ENCODE measurements at regions of chr6 and their contacts with region 1.

Region 1: DNA sequence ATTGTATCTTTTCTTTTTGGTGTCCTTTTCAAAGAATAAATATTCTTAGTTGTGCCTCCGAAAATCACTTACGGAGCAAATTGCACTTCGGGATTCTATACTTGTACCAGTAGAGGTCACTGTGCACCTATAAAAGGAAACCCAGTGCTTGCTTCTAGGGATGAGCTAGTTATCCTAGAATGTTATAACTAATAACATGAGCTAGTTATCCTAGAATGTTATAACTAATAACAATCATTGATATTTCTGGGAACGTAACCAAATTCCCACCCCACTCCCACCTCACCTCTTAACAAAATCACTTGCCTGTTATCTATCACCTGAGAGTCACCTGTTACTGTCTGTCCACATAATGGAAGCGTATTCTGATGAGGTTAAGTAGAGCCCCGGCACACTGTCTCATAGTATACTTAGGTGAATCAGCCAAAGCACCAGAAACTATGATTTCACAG is 126.9 kb upstream of the TIAM2 start:
- DNase-seq: no peak
- H3K4me3 ChIP-seq: no peak overlapping the region
- H3K27ac ChIP-seq: no peak overlapping the region
- H3K27me3 ChIP-seq: no peaks in the 10 kb centered on the region
- CTCF ChIP-seq: peak; percentile 59 to 88 (median 76)

Region 2: GRCh38 chr6:154689493-154690255 is 178.5 kb before region 1 on chr6:
- intact Hi-C with region 1: no loop called
- DNase-seq: no peak
- H3K4me3 ChIP-seq: no peak overlapping the region
- H3K27ac ChIP-seq: no peak overlapping the region
- H3K27me3 ChIP-seq: no peaks in the 10 kb centered on the region
- CTCF ChIP-seq: no peak

Region 3: DNA sequence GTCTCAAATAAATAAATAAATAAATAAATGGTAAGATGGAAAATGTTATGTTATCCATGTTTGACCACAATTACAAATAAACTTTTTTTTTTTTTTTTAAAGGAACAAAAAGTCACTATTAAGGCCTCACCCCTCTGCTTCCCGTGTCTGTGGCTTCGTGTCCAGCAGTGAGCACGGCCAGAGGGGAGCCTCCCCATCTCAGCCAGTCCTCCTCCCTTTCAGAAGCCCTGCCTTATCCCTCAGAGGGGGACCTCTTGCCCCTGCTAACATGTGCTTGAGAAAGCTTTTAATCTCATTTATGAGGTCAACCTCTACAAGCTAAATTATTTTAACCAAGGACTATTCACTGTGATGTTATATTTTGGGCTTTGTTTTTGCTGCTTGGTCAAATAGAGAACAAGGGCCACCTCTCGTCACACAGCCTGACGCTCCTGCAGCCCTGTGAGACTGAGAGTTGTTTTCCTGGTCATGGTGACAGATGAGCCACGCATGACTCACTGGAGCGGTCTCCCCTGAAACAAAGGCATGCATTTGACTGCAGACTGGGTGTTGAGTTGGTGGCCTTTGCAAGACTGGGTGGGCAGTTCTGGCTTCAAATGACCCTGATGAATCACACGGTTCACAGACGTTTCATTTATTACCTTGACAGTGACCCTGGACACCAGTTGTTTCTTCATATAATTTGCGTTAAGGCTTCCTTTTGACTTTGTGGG is 258.7 kb after region 1 on chr6:
- intact Hi-C with region 1: no loop called
- DNase-seq: peak in 1 of 10 donors; percentile 51
- H3K4me3 ChIP-seq: no peak overlapping the region
- H3K27ac ChIP-seq: no peak overlapping the region
- H3K27me3 ChIP-seq: no peaks in the 10 kb centered on the region
- CTCF ChIP-seq: no peak

Region 4: GRCh38 chr6:155235087-155235486 is 366.9 kb after region 1 on chr6:
- intact Hi-C with region 1: loop called (anchors 10 kb)
- DNase-seq: no peak
- H3K4me3 ChIP-seq: no peak overlapping the region
- H3K27ac ChIP-seq: peak overlapping the region in 22 of 59 donors; percentile 9 to 67 (median 35)
- H3K27me3 ChIP-seq: no peaks in the 10 kb centered on the region
- CTCF ChIP-seq: no peak